ENCODE measurements at regions of chr11 and their contacts with region 1.

Region 1: DNA sequence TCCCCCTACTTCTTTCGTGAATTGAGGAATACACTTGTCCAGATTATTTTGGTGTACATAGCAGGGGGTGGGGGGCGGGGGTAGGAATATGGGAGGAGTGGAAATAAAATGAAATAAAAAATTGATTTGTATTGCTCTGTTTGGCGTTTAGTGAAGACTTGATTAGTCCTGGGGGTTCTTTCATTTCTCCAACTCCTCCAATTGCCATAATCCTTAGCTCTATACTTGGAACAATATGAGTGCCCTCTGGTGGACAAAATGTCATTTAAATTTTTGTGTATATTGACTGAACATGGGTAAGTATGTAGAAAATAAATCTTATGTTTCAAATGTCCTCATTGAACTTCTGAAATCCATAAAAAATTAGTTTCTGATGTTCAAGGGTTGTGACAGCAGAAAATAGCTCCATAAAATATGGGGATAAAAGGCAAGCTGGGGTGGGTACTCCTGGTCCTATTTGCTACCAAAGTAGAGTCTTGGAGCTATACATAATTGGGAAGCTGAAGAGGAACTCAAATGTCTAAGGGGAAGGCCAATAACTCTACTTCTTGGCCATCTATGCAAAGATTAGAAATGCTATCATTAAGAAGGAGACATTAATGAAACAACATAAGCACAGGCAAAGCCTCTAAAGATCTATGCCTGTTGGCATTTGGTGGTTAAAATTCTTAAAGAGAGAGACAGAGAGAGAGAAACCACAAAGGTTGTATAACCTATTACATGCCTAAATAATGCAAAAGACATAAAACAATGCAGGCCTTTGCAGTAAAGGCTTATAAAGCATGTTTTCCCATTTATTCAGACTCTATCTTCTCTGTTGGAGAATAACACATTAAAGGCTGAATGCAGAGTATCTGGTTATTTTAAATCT is 421.6 kb downstream of the METTL15 start:
- DNase-seq: peak; percentile 12

Region 2: DNA sequence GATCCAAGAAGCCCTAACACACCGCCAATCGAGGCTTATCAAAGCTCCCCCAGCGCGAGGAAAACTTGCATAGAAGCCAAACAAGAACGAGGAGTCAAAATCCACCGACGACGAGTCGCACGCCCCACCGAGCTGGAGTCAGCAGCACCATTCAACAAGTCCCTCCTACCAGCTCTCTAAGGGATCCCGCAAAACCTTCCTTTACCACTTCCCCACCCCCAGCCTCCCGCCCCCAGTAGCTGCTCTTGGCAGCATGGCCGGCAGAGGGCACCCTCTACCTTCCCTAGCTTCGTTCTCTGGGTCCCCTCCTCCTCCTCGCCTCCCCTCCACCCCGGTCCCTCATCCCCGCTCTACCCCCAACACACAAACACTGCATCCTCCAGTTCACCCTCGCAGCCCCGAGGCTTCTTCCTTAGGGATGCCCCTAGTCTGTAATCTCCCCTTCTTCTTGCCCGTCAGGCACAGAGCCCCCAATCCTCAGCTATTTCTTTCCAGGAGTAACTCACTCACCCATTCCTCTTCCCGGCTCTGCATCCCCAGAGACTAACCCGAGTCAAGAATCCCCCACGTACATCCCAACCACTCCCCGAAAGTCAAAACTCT is 830.8 kb before region 1 on chr11:
- CTCF ChIA-PET with region 1: interaction called, 16 read pairs
- POLR2A ChIA-PET with region 1: interaction called, 4 read pairs
- DNase-seq: peak; percentile 82

Region 3: DNA sequence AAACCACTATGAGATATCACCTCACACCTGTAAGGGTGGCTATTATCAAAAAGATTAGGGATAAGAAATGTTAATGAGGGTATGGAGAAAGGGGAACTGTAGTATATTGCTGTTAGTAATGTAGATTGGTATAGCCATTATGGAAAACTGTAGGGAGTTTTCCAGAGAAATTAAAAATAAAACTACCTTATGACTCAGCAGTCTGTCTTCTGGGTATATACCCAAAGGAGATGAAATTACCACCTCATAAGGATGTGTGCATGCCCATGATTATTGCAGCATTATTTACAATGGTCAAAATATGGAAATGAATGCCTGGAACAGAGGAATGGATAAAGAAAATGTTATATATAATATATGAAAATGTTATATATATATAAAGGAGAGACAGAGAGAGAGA is 117.7 kb before region 1 on chr11:
- CTCF ChIA-PET with region 1: no interaction called
- POLR2A ChIA-PET with region 1: no interaction called
- DNase-seq: no peak

Region 4: DNA sequence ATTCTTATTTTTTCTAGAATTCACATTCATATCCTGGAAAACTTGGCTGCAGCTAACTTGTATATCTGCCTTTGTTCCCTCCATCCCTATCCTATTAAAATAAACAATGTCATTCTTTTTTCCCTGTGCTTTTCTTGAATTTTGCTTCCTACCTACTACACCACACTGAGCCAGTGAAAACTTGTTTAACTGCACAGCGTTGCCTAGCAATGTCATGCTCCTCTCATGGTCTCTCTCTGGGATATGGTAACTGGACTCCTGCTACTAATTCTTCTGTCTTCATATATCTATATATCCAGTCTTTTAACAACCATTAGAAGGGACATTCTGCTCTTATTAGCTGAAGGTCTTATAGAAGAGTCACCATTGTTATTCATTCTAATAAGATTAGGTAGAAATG is 12.8 kb after region 1 on chr11:
- CTCF ChIA-PET with region 1: no interaction called
- POLR2A ChIA-PET with region 1: no interaction called
- DNase-seq: no peak